Panc1 (cell line): ENCODE measurements at regions of chr19 and their contacts with region 1.

Region 1: DNA sequence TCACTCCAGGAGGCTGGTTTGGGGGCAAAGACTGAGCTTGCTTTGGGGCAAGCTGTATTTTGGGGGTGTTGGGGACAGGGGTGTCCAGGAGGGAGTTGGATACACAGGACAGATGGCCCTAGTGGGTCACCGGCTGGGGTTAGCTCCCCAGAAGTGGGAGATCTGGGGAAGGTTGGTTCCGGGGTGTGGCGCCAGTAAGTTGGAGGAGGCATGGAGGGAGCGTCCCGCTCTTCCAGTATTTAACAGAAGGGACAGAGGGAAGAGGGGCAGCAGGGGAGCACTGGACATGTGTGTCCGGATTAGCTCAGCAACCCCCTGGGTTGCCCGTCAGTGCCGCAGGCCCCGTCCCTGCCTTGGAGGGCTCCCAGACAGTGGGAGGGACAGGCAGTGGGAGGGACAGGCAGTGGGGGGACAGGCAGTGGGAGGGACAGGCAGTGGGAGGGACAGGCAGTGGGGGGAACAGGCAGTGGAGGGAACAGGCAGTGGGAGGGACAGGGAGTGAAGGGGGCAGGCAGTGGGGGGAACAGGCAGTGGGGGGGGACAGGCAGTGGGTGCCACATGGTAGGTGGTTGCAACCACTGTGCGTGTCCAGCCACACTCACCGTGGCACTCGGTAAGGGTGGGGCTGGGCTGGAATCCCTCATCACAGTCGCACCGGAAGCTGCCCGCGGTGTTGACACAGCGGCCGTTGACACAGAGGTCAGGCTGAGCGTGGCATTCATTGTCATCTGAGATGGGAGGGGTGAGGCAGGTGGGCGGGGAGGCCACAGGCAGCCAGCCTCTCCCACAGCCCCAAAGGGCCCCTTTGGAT is 33.2 kb downstream of the CCL25 start:
- DNase-seq: no peak
- ATAC-seq: peak; percentile 74
- H3K4me3 ChIP-seq: no peak overlapping the region
- H3K27ac ChIP-seq: no peak overlapping the region; the same call in 1 of the 2 replicates
- H3K4me1 ChIP-seq: peaks cover 8% of the 10 kb centered on the region; the same call in 1 of the 2 replicates
- H3K27me3 ChIP-seq: no peaks in the 10 kb centered on the region
- CTCF ChIP-seq: no peak

Region 2: GRCh38 chr19:8108560-8109445 is 23.0 kb after region 1 on chr19:
- CTCF ChIA-PET with region 1: no interaction called
- POLR2A ChIA-PET with region 1: no interaction called
- in situ Hi-C with region 1: no loop called
- intact Hi-C with region 1: no loop called
- DNase-seq: no peak
- ATAC-seq: no peak
- H3K4me3 ChIP-seq: no peak overlapping the region
- H3K27ac ChIP-seq: no peak overlapping the region
- H3K4me1 ChIP-seq: 0 out of 2 replicates have a peak, but pooled peaks cover 2% of the 10 kb centered on the region
- H3K27me3 ChIP-seq: no peaks in the 10 kb centered on the region
- CTCF ChIP-seq: no peak

Region 3: DNA sequence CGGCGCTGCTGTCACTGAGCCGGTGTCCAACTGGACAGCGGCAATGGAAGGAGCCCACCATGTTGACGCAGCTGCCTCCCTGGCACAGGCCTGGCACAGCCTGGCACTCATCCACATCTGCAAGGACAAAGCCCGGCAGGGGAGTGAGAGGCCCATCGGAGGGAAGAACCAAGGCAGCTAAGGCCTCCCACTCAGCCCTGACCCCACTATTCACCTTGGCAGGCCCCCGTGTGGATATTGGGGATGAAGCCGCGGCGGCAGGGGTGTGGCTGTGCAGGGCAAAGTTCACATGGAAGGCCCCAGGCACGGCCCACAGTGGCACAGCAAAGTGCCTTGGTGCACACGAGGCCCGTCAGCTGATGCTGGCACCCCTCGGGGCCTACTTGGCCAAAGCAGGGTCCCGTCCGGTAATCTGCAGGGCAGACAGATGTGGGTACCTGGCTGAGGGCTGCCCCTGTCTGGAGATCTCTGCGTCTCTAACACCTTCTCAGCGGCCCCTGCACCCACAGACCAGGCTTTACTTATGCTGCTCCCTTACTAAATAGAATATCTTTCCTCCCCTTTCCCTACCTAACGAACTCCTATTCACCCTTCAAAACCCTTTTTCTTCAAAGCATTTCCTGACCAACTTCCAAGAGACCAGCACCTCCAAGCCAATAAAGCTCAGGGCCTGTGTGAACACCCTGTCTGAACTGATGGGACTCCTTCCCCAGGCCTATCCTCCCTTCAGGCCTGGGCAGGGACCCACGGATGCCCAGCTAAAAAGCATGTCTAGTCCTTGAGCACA is 56.1 kb after region 1 on chr19:
- CTCF ChIA-PET with region 1: interaction called, 17 read pairs
- POLR2A ChIA-PET with region 1: no interaction called
- in situ Hi-C with region 1: no loop called
- intact Hi-C with region 1: no loop called
- DNase-seq: no peak
- ATAC-seq: no peak
- H3K4me3 ChIP-seq: no peak overlapping the region
- H3K27ac ChIP-seq: no peak overlapping the region
- H3K4me1 ChIP-seq: no peaks in the 10 kb centered on the region
- H3K27me3 ChIP-seq: no peaks in the 10 kb centered on the region
- CTCF ChIP-seq: no peak